H1 (cell line): ENCODE measurements at regions of chr1 and their contacts with region 1.

Region 1: GRCh38 chr1:165367375-165367993 is 11.0 kb upstream of the LMX1A start:
- DNase-seq: peak in 1 of 2 experiments; percentile 98
- H3K4me3 ChIP-seq: no peak overlapping the region
- H3K27ac ChIP-seq: no peak overlapping the region
- H3K4me1 ChIP-seq: peaks cover 0 to 4% (median 0%) of the 10 kb centered on the region in 4 experiments; a peak in 3 of 7 replicates
- H3K27me3 ChIP-seq: peaks cover 0 to 5% (median 0%) of the 10 kb centered on the region in 4 experiments; a peak in 1 of 7 replicates
- CTCF ChIP-seq: peak; percentile 90 to 99 (median 91)
- EP300 ChIP-seq: no peak
- POLR2A ChIP-seq: no peak
- RAD21 ChIP-seq: peak; percentile 64 to 76

Region 2: DNA sequence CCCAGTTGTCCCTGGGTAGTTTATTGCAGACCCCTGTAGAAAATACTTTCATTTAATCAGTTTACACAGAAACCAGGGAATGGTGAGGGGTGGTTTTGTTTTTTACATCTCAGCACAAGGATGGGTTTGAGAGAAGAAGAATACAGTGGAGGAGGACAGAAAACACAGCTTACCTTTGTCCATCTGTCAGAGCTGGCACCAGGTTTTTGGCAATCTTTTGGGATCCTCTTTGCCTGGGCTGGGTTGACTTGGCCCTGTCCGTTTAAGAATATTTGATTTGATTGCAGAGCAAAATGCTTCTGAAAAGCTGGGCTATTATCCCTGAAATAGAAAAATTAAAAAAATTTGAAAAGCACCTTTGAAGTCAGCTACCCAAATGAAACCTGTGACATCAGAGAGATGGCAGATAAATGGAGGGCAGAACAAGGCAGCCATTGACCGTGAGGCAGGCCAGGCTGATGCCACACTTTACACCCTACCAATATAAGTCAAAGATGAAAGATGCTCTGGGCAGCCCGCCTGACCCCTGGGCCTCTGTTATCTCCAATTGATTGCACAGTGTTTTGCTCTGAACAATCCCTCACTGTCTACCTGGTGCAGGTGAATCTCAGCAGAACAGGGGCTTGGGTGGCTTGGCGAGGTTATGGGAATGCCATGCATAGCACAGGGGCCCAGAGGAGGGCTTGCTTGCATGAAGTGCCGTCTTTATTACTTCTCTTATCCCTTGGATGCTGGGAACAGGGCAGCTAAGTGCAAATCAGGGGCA is 229.8 kb before region 1 on chr1:
- CTCF ChIA-PET with region 1: interaction called, 17 read pairs
- POLR2A ChIA-PET with region 1: no interaction called
- DNase-seq: no peak
- H3K4me3 ChIP-seq: no peak overlapping the region
- H3K27ac ChIP-seq: no peak overlapping the region
- H3K4me1 ChIP-seq: no peaks in the 10 kb centered on the region
- H3K27me3 ChIP-seq: no peaks in the 10 kb centered on the region
- CTCF ChIP-seq: no peak
- EP300 ChIP-seq: no peak
- POLR2A ChIP-seq: no peak
- RAD21 ChIP-seq: no peak

Region 3: DNA sequence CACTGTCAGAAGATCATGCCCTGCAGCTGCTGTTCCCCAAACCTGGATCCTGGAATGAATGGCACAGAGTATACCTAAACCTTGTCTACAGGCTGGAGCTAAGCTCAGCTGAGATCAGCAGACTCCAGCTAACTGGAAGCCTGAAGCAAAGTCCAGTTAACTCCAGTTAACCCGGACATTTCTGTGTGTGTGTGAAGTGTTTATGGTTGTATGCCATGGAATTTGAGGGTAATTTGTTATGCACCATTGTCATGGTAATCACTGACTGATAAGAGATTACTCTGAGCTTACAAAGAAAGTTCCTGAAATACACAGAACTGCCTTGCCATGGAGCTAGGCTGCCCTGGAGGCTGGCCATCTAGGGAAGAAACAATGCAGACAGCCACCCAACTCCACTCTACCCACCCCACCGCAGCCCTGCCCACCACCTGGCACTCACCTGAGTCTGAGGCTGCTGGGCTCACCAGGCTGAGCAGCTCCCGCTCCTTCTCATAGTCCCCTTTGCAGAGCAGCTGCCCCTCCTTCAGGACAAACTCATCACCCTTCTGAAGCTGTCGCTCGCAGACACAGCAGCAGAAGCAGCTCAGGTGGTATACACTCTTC is 118.4 kb before region 1 on chr1:
- CTCF ChIA-PET with region 1: interaction called, 70 read pairs
- POLR2A ChIA-PET with region 1: no interaction called
- DNase-seq: no peak
- H3K4me3 ChIP-seq: no peak overlapping the region
- H3K27ac ChIP-seq: no peak overlapping the region
- H3K4me1 ChIP-seq: peaks cover 0 to 7% (median 5%) of the 10 kb centered on the region in 4 experiments; a peak in 4 of 7 replicates
- H3K27me3 ChIP-seq: no peaks in the 10 kb centered on the region; a peak in 1 of 7 replicates
- CTCF ChIP-seq: no peak
- EP300 ChIP-seq: no peak
- POLR2A ChIP-seq: no peak
- RAD21 ChIP-seq: no peak

Region 4: DNA sequence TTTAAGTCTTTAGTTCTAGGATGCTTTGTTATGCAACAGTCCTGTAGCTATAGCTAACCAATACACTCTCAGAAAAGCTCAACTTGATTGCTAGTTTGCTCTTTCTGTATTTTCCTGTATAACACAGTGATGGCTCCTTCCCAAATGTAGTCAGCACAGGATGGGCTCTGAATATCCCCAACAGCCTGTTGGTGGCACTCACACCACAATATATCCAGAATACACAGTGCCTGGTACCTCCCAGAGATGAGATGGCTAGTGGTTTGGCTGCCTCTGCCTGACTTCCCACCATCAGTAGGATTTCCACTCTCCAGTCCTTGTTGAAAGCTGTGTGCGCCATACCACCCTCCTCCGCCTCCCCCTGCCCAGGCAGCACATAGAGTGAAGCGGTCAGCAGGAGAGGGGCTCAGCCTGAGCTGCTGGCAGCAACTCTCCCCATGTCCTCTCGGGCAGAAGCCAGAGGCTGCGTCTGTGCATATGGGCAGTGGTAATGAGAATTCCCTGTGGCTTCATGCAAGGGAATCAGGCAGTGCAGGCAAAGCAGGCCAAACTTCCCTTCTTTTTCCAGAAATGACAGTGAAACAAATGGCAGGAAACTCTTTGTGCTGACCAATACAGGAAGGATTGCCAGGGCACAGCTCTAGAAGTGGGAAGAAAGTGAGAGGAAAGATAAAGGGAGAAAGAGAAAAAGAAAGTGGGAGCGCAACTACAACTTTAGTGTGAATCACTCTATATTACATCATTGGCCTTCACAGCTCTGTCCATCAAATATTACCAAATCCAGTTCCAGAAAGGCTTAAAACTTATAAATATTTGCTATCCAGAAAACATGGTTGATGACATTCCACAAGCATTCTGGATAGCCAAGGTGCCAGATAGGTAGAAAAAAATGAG is 60.7 kb before region 1 on chr1:
- CTCF ChIA-PET with region 1: interaction called, 32 read pairs
- POLR2A ChIA-PET with region 1: no interaction called
- DNase-seq: no peak
- H3K4me3 ChIP-seq: no peak overlapping the region
- H3K27ac ChIP-seq: no peak overlapping the region
- H3K4me1 ChIP-seq: peaks cover 0 to 2% (median 0%) of the 10 kb centered on the region in 4 experiments; a peak in 2 of 7 replicates
- H3K27me3 ChIP-seq: no peaks in the 10 kb centered on the region
- CTCF ChIP-seq: peak in 2 of 3 experiments; percentile 35; a peak in 2 of 4 replicates
- EP300 ChIP-seq: no peak
- POLR2A ChIP-seq: no peak
- RAD21 ChIP-seq: peak; percentile 41 to 49

Region 5: DNA sequence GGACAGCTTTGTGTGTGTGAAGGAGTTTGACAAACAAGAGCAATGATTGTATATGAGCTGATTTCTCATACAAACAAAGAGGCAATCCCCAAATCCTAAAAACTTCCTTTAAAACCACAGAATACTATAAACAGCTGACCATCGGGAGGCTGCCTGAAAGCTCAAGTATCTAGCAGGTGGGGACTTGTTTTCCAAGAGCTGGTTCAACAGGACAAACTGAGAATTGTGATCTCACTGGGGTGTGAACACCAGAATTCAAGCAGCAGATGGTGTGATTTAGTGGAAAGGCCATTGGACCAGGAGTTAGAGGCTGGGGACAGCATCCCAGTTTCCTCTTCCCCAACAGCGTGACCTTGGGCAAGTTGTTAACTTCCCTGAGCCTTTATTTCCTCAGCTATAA is 24.9 kb before region 1 on chr1:
- CTCF ChIA-PET with region 1: interaction called, 54 read pairs
- POLR2A ChIA-PET with region 1: no interaction called
- DNase-seq: no peak
- H3K4me3 ChIP-seq: no peak overlapping the region
- H3K27ac ChIP-seq: no peak overlapping the region
- H3K4me1 ChIP-seq: peaks cover 0 to 4% (median under 1%) of the 10 kb centered on the region in 4 experiments; a peak in 2 of 7 replicates
- H3K27me3 ChIP-seq: peaks cover 0 to 2% (median under 1%) of the 10 kb centered on the region in 4 experiments; a peak in 2 of 7 replicates
- CTCF ChIP-seq: no peak
- EP300 ChIP-seq: no peak
- POLR2A ChIP-seq: no peak
- RAD21 ChIP-seq: no peak

Region 6: DNA sequence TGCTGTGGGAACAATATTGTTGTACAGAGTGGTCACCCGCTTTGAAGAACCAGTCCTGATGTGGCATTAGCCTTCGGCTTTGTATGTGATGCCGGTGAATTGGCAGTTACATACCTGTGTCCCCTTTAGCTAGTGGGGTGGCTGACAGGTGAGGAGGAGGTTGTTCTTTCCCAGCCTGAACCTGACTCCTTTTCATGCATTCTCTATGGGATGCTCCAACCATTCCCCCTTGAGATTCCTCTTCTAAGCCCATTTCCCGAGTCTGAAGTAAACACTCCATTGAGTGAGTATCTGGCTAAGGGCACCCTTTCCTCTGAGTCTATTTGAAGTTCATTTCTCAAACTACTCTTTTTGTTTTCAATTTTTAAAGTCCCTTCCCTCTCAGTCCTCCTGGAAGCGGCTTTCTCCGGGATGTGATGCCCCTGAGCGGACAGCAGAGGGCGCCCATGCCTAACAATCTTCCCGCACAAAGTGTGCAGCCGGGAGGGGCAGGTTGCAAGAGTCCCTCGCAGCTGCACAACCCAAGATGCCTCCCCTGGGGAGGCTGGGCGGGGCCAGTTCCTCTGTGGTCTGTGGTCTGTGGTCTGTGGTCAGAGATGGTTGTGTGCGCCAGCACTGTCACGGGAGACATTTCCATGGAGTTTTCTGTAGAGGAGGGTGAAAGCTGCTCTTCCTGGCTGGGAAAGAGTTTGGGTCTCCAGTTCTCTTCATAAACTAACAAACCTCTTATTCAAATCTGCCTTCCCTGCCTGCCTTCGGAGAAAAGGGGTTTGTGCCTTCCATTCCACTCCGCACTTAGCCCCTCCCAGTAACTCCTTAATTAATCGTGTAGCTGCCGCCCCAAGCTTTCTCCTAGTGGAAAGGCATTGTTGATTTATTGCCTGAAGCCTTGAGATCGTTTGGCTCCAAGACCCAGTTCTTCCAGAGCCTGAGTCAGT is 25.4 kb after region 1 on chr1:
- CTCF ChIA-PET with region 1: interaction called, 38 read pairs
- POLR2A ChIA-PET with region 1: no interaction called
- DNase-seq: peak in 1 of 2 experiments; percentile 88
- H3K4me3 ChIP-seq: peak overlapping the region in 3 of 4 experiments; percentile 17 to 50 (median 34); a peak in 6 of 8 replicates
- H3K27ac ChIP-seq: no peak overlapping the region
- H3K4me1 ChIP-seq: no peaks in the 10 kb centered on the region; a peak in 1 of 7 replicates
- H3K27me3 ChIP-seq: no peaks in the 10 kb centered on the region; a peak in 1 of 7 replicates
- CTCF ChIP-seq: peak; percentile 85 to 92 (median 88)
- EP300 ChIP-seq: peak in 1 of 2 experiments; percentile 14; a peak in 1 of 3 replicates
- POLR2A ChIP-seq: no peak
- RAD21 ChIP-seq: peak; percentile 92 to 94

Region 7: DNA sequence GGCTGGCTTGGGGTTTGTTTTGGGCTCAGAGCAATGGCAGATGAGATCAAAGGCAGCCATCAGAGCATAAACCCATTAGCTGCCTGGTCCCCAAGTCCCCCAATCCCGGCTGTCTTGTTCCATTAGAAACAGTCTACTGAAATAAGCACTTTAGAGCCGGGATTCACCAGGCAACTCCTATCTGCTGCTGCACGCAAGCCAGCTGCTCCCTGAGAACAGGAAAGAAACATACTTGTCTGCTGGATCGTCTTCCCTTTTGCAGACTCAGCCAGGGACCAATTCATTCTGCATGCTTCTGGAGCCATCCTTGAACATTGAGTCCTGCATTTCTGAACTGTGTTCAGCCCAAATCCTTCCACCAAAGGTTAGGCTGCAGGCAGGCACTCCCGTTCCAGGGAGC is 55.7 kb after region 1 on chr1:
- CTCF ChIA-PET with region 1: no interaction called
- POLR2A ChIA-PET with region 1: no interaction called
- DNase-seq: no peak
- H3K4me3 ChIP-seq: no peak overlapping the region
- H3K27ac ChIP-seq: no peak overlapping the region
- H3K4me1 ChIP-seq: no peaks in the 10 kb centered on the region
- H3K27me3 ChIP-seq: no peaks in the 10 kb centered on the region
- CTCF ChIP-seq: no peak
- EP300 ChIP-seq: no peak
- POLR2A ChIP-seq: no peak
- RAD21 ChIP-seq: no peak